CD4-positive, alpha-beta memory T cell (primary cell): ENCODE measurements at regions of chrX and their contacts with region 1.

Region 1: GRCh38 chrX:136652822-136653723 is 5.1 kb downstream of the CD40LG start:
- DNase-seq: peak in 1 of 5 donors; percentile 62
- H3K4me3 ChIP-seq: peak overlapping the region; percentile 84
- H3K4me3 Mint-ChIP-seq: peak overlapping the region; percentile 89 to 99 (median 97)
- H3K27ac ChIP-seq: peak overlapping the region; percentile 82
- H3K27ac Mint-ChIP-seq: peak overlapping the region; percentile 66 to 95 (median 90)
- H3K4me1 ChIP-seq: peaks cover 55% of the 10 kb centered on the region
- H3K4me1 Mint-ChIP-seq: peaks cover 27 to 70% (median 38%) of the 10 kb centered on the region in 4 donors
- H3K27me3 ChIP-seq: no peaks in the 10 kb centered on the region
- H3K27me3 Mint-ChIP-seq: no peaks in the 10 kb centered on the region

Region 2: GRCh38 chrX:136310418-136310817 is 342.7 kb before region 1 on chrX:
- CTCF ChIA-PET with region 1: no interaction called
- POLR2A ChIA-PET with region 1: no interaction called
- intact Hi-C with region 1: no loop called
- DNase-seq: no peak
- H3K4me3 ChIP-seq: no peak overlapping the region
- H3K4me3 Mint-ChIP-seq: no peak overlapping the region
- H3K27ac ChIP-seq: no peak overlapping the region
- H3K27ac Mint-ChIP-seq: no peak overlapping the region
- H3K4me1 ChIP-seq: no peaks in the 10 kb centered on the region
- H3K4me1 Mint-ChIP-seq: no peaks in the 10 kb centered on the region
- H3K27me3 ChIP-seq: no peaks in the 10 kb centered on the region
- H3K27me3 Mint-ChIP-seq: peaks cover 0 to 3% of the 10 kb centered on the region in 2 donors

Region 3: DNA sequence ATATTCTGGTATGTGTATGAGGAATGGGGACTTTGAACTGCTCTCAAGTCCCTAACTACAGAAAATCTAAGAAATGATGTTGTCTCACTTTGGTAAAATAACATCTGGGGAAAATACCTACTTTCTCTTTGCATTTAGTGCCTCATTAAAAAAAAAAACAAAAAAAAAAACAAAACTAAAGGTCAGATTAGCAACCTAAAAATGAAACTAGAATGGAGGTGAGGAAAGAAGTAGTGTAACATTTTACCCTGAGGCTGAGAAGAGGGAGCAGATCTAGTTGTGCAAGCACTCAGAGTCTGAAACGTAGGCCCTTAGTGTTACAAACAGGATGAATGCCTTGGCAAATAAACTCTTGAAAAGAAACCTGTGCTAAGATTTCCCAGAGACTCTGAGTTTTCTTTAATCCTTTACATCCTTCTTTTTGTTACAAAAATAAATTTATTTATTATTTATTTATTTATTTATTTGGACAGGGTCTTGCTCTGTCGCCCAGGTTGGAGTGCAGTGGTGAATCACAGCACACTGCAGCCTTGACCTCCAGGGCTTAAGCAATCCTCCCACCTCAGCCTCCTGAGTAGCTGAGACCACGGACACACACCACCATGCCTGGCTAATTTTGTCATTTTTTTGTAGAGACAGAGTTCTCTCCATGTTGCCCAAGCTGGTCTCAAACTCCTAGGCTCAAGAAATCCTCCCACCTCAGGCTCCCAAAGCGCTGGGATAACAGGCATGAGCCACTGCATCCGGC is 64.9 kb before region 1 on chrX:
- CTCF ChIA-PET with region 1: no interaction called
- POLR2A ChIA-PET with region 1: interaction called, 28 read pairs
- intact Hi-C with region 1: no loop called
- DNase-seq: peak in 4 of 5 donors; percentile 26 to 54 (median 38)
- H3K4me3 ChIP-seq: no peak overlapping the region
- H3K4me3 Mint-ChIP-seq: peak overlapping the region in 7 of 8 donors; percentile 24 to 86 (median 49)
- H3K27ac ChIP-seq: peak overlapping the region; percentile 71
- H3K27ac Mint-ChIP-seq: peak overlapping the region; percentile 90 to 97 (median 93)
- H3K4me1 ChIP-seq: peaks cover 69% of the 10 kb centered on the region
- H3K4me1 Mint-ChIP-seq: peaks cover 40 to 70% (median 53%) of the 10 kb centered on the region in 4 donors
- H3K27me3 ChIP-seq: no peaks in the 10 kb centered on the region
- H3K27me3 Mint-ChIP-seq: no peaks in the 10 kb centered on the region

Region 4: DNA sequence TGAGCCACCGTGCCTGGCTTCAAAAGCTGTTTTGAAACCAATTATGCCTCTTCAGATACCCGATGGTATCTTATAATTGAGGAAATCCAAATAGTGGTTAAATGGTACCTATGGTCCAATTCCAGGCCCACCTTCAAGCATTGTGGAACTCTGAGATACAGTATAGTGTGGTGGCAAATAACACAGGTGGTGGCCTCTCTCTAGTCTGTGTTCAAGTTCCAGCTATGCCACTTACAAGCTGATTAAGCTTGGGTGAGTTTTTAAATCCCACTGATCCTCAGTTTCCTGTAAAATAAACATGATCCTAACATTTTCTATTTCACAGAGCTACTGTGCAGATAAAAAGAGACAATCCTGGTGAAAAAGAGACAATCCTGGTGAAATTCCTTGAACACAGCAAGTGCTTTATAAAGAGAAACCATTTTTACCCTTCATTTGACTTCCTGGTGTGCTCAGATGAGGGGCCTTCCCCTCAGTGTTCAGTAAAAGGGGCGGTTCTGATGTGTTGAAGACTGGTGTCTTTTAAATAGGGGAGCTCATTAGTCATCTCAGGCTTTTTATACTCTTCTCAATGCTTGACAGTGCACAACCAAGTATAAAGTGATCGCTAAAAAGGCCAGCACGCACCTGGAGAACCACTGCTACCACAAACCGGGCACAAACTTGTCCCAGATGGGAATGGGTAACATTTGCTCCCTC is 35.9 kb before region 1 on chrX:
- CTCF ChIA-PET with region 1: interaction called, 8 read pairs
- POLR2A ChIA-PET with region 1: interaction called, 148 read pairs
- intact Hi-C with region 1: no loop called
- DNase-seq: peak in 4 of 5 donors; percentile 42 to 69 (median 48)
- H3K4me3 ChIP-seq: peak overlapping the region in 1 of 2 donors; percentile 18
- H3K4me3 Mint-ChIP-seq: peak overlapping the region; percentile 27 to 81 (median 68)
- H3K27ac ChIP-seq: peak overlapping the region; percentile 57
- H3K27ac Mint-ChIP-seq: peak overlapping the region; percentile 79 to 93 (median 87)
- H3K4me1 ChIP-seq: peaks cover 67% of the 10 kb centered on the region
- H3K4me1 Mint-ChIP-seq: peaks cover 36 to 70% (median 46%) of the 10 kb centered on the region in 4 donors
- H3K27me3 ChIP-seq: no peaks in the 10 kb centered on the region
- H3K27me3 Mint-ChIP-seq: no peaks in the 10 kb centered on the region

Region 5: DNA sequence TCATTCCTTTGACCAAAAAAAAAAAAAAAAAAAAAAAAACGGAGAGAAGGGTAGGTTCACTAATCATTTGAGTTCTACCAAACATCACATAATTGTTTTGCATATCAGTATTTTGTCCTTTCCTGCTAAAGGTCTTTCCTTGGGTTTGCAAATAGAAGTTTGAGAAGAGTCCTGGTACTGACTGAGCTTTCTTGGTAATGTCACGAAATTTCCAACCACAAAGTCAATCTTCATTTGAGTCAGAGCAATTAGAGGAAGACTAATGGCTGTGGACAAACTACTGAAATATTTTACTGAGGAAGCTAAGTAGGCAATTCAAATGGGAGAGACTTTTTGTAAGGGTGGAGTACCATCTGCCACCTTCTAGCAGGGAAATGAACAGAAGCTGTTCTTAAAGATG is 26.8 kb before region 1 on chrX:
- CTCF ChIA-PET with region 1: interaction called, 4 read pairs
- POLR2A ChIA-PET with region 1: interaction called, 148 read pairs
- intact Hi-C with region 1: no loop called
- DNase-seq: no peak
- H3K4me3 ChIP-seq: no peak overlapping the region
- H3K4me3 Mint-ChIP-seq: peak overlapping the region in 7 of 8 donors; percentile 15 to 82 (median 24)
- H3K27ac ChIP-seq: no peak overlapping the region
- H3K27ac Mint-ChIP-seq: peak overlapping the region in 6 of 7 donors; percentile 32 to 94 (median 76)
- H3K4me1 ChIP-seq: peaks cover 90% of the 10 kb centered on the region
- H3K4me1 Mint-ChIP-seq: peaks cover 59 to 91% (median 77%) of the 10 kb centered on the region in 4 donors
- H3K27me3 ChIP-seq: no peaks in the 10 kb centered on the region
- H3K27me3 Mint-ChIP-seq: no peaks in the 10 kb centered on the region

Region 6: GRCh38 chrX:136635235-136635634 is 17.8 kb before region 1 on chrX:
- CTCF ChIA-PET with region 1: interaction called, 5 read pairs
- POLR2A ChIA-PET with region 1: interaction called, 137 read pairs
- intact Hi-C with region 1: loop called (anchors 1 kb)
- DNase-seq: peak; percentile 56 to 68 (median 62)
- H3K4me3 ChIP-seq: peak overlapping the region in 1 of 2 donors; percentile 47
- H3K4me3 Mint-ChIP-seq: peak overlapping the region; percentile 51 to 88 (median 82)
- H3K27ac ChIP-seq: peak overlapping the region; percentile 56
- H3K27ac Mint-ChIP-seq: peak overlapping the region; percentile 78 to 96 (median 94)
- H3K4me1 ChIP-seq: peaks cover 97% of the 10 kb centered on the region
- H3K4me1 Mint-ChIP-seq: peaks cover 52 to 94% (median 73%) of the 10 kb centered on the region in 4 donors
- H3K27me3 ChIP-seq: no peaks in the 10 kb centered on the region
- H3K27me3 Mint-ChIP-seq: no peaks in the 10 kb centered on the region

Region 7: DNA sequence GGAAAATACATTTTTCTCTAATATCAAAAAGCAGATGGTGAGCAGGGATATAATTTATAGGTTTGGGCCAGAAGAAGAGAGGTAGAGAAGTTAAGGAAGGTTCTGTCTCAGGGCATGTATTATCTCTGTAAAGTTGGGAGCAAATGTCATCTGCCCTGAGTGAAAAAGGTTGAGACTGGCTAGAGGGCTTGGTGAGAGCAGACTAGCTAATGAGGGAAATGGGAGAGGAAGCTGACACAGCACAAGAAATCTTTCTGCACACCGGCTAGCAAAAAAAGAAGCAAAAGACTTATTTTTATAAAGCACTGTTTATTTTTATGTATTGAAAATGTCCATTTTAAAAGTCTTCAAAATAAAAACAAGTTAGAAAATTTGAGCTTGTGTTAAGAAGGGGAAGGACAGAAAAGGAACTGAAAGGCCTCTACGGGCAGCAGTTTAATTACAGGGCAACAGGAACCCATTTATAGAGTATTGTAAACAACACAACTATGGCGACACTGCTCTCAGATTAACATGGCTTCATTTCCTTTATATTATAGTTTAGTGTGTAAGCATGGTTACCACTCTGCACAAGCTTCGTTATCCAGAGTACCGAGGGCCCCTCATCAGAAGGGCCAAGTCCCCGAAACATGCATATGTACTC is 12.3 kb after region 1 on chrX:
- CTCF ChIA-PET with region 1: interaction called, 3 read pairs
- POLR2A ChIA-PET with region 1: interaction called, 163 read pairs
- intact Hi-C with region 1: no loop called
- DNase-seq: no peak
- H3K4me3 ChIP-seq: no peak overlapping the region
- H3K4me3 Mint-ChIP-seq: peak overlapping the region in 7 of 8 donors; percentile 33 to 83 (median 49)
- H3K27ac ChIP-seq: peak overlapping the region; percentile 4
- H3K27ac Mint-ChIP-seq: peak overlapping the region; percentile 69 to 95 (median 80)
- H3K4me1 ChIP-seq: peaks cover 95% of the 10 kb centered on the region
- H3K4me1 Mint-ChIP-seq: peaks cover 52 to 94% (median 71%) of the 10 kb centered on the region in 4 donors
- H3K27me3 ChIP-seq: no peaks in the 10 kb centered on the region
- H3K27me3 Mint-ChIP-seq: no peaks in the 10 kb centered on the region

Region 8: GRCh38 chrX:136674270-136674985 is 21.4 kb after region 1 on chrX:
- CTCF ChIA-PET with region 1: interaction called, 5 read pairs
- POLR2A ChIA-PET with region 1: interaction called, 163 read pairs
- intact Hi-C with region 1: loop called (anchors 2 kb)
- DNase-seq: peak; percentile 64 to 79 (median 75)
- H3K4me3 ChIP-seq: peak overlapping the region in 1 of 2 donors; percentile 12
- H3K4me3 Mint-ChIP-seq: peak overlapping the region; percentile 37 to 91 (median 78)
- H3K27ac ChIP-seq: peak overlapping the region; percentile 58
- H3K27ac Mint-ChIP-seq: peak overlapping the region; percentile 89 to 99 (median 94)
- H3K4me1 ChIP-seq: peaks cover 98% of the 10 kb centered on the region
- H3K4me1 Mint-ChIP-seq: peaks cover 68 to 100% (median 79%) of the 10 kb centered on the region in 4 donors
- H3K27me3 ChIP-seq: no peaks in the 10 kb centered on the region
- H3K27me3 Mint-ChIP-seq: no peaks in the 10 kb centered on the region